ENCODE measurements at regions of chr1 and their contacts with region 1.

Region 1: DNA sequence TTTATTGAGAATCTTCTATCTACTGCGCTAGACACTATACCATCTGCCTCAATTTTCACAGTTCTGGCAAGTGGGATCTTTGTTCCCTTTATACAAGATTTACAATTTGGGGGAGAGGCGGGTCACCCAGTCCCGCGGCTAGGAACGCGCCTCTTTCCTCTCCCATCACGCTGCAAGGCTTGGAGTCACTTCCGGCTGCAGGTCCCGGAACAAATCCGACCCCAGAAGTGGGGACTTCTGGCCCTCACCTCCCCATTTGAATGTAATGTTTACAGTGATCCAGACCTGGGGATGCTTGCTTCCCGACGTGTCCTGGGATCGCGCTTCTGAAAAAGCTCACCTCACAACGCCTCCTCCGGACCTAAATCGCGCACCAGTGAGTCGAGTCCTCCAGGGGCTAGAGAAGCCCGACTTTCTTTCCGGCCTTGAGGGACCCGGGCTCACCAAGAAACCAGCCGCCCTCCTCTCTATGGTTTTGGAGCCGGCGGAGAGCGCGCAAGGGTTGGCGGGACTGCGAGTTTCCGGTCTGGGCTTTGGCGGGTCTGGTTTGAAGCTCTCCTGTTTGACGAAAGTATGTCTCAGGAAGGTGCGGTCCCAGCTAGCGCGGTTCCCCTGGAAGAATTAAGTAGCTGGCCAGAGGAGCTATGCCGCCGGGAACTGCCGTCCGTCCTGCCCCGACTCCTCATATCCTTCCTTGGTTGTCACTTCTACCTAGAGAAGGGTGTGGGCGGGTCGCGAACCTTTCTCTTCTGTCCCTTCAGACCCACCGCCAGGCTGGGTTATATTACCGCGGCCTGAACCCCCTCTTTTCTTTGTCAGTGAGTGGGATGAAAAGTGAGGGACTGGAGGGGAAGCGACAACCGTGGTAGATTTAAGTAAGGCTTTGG is at the start of gene METTL18:
- DNase-seq: peak; percentile 96
- ATAC-seq: peak; percentile 98
- H3K4me3 Mint-ChIP-seq: peak within 1 kb of the TSS; percentile 96
- H3K27ac Mint-ChIP-seq: peak within 1 kb of the TSS; percentile 98
- H3K4me1 Mint-ChIP-seq: peaks cover 46% of the 10 kb centered on the region
- H3K27me3 Mint-ChIP-seq: no peaks in the 10 kb centered on the region
- total RNA-seq, gene METTL18: 11.6 to 13.3 TPM

Region 2: DNA sequence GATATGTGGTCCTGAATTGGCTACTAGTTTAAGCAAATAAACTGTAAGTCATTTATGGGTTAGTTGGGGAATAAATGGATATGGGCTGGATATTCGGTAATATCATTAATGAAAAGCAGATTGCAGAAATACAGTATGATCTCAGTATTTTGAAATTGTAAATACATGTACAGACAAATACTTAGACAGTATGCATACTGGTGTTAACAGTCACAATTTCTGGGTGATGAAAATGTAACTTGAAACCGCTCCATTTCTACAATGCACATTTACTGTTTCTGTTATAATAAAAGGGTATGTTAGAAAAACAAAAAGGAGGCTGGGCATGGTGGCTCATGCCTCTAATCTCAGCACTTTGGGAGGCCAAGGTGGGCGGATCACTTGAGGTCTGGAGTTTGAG is 398.8 kb before region 1 on chr1:
- CTCF ChIA-PET with region 1: no interaction called
- POLR2A ChIA-PET with region 1: no interaction called
- intact Hi-C with region 1: no loop called
- DNase-seq: no peak
- ATAC-seq: no peak
- H3K4me3 Mint-ChIP-seq: no peak overlapping the region
- H3K27ac Mint-ChIP-seq: no peak overlapping the region
- H3K4me1 Mint-ChIP-seq: no peaks in the 10 kb centered on the region
- H3K27me3 Mint-ChIP-seq: no peaks in the 10 kb centered on the region

Region 3: DNA sequence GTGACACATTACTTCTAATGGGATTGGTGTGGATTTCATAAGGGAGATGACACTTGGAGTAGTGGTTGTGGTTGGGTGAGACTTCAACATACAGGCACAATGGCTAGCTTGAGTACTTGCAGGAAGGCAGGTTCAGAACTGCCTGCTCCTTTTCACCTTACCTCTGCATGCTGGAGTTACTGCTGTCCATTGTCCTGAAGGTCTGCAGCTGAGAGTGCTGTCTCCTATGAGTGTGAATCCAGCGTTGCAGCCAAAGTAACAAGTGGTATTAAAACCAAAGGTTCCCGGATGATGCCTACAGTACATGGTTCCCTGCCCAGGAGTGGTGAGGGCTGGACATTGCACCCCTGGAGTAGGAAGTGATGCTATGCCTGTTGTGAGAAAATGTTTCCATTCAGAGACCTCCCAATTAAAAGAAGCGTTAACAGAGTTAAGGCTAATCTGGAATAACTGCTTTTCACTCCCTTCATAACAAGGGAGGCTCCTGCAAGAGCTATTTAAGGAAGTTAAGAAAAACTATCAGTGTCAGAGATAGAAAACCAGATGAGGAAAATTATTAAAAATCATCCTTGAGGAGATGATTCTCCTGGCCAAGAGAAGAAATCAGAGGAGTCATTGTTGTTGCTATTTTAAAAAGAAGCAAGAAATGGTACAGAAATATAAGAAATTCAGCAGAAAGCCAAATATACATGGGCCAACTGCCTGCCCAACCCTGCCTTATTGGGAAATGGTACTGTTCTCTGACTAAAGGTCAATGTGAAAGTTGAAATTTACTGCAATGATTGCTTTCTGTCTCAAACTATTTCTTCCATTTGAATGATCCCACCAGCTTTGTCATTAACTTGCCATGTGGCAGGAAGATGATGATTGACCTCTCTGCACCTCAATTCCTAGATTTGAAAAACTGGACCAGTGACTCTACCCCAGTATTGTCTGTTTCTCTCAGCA is 198.7 kb before region 1 on chr1:
- CTCF ChIA-PET with region 1: interaction called, 9 read pairs
- POLR2A ChIA-PET with region 1: no interaction called
- intact Hi-C with region 1: loop called in 1 of 2 experiments (anchors 2 kb)
- DNase-seq: peak; percentile 57
- ATAC-seq: peak; percentile 54
- H3K4me3 Mint-ChIP-seq: no peak overlapping the region
- H3K27ac Mint-ChIP-seq: no peak overlapping the region
- H3K4me1 Mint-ChIP-seq: peaks cover 62% of the 10 kb centered on the region
- H3K27me3 Mint-ChIP-seq: no peaks in the 10 kb centered on the region

Region 4: GRCh38 chr1:169809370-169810095 is 14.8 kb after region 1 on chr1:
- CTCF ChIA-PET with region 1: interaction called, 11 read pairs
- POLR2A ChIA-PET with region 1: interaction called, 3 read pairs
- intact Hi-C with region 1: no loop called
- DNase-seq: peak; percentile 24
- ATAC-seq: no peak
- H3K4me3 Mint-ChIP-seq: no peak overlapping the region
- H3K27ac Mint-ChIP-seq: no peak overlapping the region
- H3K4me1 Mint-ChIP-seq: no peaks in the 10 kb centered on the region
- H3K27me3 Mint-ChIP-seq: no peaks in the 10 kb centered on the region

Region 5: DNA sequence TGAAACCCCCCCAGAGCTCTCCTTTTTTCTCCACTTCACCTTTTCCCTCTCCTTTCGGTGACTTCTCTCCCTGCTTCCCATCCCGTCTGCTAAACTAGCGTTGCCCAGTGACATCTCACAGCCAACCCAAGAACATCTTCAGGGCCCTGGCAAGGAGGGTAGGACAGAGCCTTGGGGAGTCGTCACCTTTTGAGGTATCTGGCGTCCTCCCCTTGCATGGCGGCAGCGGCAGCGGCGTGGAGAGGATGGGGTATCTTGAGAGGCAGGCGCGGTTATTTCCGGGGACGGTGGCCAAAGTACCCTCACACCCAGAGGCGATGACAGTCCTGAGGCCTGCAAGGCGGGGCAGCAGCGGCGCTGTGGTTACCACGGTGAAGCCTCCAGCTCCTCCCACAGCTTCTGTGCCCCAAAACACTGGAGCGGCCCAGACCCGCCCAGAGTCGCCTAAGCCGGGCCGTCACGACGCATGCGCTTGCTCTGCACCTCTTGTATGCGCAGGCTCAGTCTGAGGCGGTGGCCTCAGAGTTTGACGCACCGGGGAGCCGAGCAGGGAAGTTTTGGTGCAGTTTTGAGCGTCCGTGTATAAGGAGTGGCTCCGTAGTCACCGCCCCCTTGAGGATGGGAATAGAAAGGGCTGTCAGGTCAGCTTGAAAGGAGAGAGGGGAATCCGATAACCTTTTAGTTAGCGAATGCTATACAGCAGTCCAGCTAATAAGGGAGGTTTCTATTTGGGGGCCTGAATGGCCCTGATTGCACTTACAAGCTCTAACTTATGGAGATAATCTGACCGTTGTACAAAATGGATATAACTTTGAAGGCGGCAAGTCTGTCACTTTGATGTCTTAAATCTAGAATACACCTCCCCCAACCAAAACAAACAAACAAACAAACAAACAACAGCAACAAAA is 279.7 kb after region 1 on chr1 and contains the start of gene KIFAP3:
- CTCF ChIA-PET with region 1: no interaction called
- POLR2A ChIA-PET with region 1: no interaction called
- intact Hi-C with region 1: loop called (anchors 2 to 10 kb)
- DNase-seq: peak; percentile 98
- ATAC-seq: peak; percentile 99
- H3K4me3 Mint-ChIP-seq: peak within 1 kb of the TSS; percentile 96
- H3K27ac Mint-ChIP-seq: peak within 1 kb of the TSS; percentile 87
- H3K4me1 Mint-ChIP-seq: peaks cover 43% of the 10 kb centered on the region
- H3K27me3 Mint-ChIP-seq: no peaks in the 10 kb centered on the region
- total RNA-seq, gene KIFAP3: 10.9 to 11.5 TPM

Region 6: DNA sequence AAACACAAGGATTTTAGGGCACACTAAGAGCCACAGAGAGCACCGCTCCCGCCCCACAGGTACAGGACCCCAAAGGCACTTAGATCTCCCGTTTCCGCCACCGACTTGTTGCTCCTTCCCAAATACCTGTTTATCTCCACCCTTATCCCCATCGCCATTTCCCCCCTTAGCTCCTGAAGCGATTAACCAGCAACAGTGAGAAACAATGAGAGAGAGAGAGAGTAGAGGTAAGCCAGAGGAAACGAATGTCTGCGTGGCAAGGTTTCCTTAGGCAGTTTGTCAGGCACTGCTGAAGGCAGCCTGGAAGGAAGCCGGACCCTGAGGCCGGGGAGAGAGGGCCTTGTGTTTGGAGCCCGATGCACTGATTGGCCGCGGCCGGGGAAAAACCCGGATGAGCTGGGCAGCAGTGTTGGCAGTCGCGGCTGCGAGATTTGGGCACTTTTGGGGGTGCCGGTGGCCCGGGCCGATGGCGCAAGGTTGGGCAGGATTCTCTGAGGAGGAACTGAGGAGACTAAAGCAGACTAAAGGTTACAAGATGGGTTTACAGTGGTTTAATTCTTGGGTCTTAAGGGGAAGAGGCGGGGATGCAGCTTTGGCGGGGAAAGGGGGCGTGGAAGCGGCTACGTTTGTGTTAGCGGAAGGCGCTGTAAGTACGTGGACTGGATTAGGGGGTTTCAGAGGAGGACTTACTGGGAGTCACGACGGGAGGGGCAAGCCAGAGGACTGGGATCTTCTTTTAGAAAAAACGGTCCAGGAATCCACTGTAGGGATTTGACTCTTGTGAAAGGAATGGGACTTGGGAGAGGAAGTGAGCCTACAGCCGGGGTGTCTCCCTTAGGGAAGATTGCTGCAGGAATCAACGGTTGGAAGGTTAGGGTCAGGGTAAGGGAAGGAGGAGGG is 737.2 kb after region 1 on chr1 and contains the start of gene GORAB:
- CTCF ChIA-PET with region 1: no interaction called
- POLR2A ChIA-PET with region 1: interaction called, 3 read pairs
- intact Hi-C with region 1: loop called in 1 of 2 experiments (anchors 1 kb)
- DNase-seq: peak; percentile 94
- ATAC-seq: peak; percentile 98
- H3K4me3 Mint-ChIP-seq: no peak within 1 kb of the TSS
- H3K27ac Mint-ChIP-seq: no peak within 1 kb of the TSS
- H3K4me1 Mint-ChIP-seq: peaks cover 15% of the 10 kb centered on the region
- H3K27me3 Mint-ChIP-seq: no peaks in the 10 kb centered on the region
- total RNA-seq, gene GORAB: 9.8 to 13.5 TPM

Region 7: DNA sequence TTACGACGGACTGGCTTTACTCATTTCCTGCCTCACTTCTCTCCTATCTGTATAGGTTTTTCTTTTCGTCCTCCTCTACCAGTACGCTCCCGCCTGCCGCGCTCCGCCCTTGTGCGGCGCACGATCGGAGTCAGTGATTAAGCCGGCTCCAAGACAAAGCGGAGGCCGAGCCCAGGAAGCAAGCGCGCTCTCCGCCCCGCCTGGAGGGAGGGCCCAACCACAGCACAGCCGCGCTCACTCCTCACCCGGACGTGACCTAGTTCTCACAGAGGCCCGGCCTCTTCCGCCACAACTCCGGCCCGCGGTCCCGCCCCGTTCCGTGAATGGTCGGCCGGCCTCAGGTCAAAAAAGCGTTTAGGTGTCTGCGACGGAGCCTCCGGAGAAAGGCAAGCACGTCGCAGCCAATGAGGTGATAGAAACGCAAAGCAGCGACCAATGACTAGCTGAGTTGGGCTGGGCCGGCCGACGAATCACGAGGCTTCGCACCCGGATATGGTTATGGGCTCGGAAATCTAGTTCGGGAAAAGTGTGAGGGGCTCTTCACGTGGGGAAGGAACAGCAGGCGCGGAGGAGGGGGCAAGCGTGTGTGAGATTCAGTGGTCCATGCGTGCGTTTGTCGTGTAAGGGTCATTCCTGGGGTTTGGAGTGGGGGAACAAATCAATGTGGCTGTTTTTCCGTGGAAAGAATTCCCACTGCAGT is 1986.6 kb after region 1 on chr1 and contains the start of gene METTL13:
- CTCF ChIA-PET with region 1: no interaction called
- POLR2A ChIA-PET with region 1: no interaction called
- intact Hi-C with region 1: loop called in 1 of 2 experiments (anchors 2 kb)
- DNase-seq: peak; percentile 99
- ATAC-seq: peak; percentile 97
- H3K4me3 Mint-ChIP-seq: peak within 1 kb of the TSS; percentile 92
- H3K27ac Mint-ChIP-seq: peak within 1 kb of the TSS; percentile 97
- H3K4me1 Mint-ChIP-seq: peaks cover 57% of the 10 kb centered on the region
- H3K27me3 Mint-ChIP-seq: no peaks in the 10 kb centered on the region
- total RNA-seq, gene METTL13: 41.1 to 52.9 TPM